ENCODE measurements at regions of chr19 and their contacts with region 1.

Region 1: DNA sequence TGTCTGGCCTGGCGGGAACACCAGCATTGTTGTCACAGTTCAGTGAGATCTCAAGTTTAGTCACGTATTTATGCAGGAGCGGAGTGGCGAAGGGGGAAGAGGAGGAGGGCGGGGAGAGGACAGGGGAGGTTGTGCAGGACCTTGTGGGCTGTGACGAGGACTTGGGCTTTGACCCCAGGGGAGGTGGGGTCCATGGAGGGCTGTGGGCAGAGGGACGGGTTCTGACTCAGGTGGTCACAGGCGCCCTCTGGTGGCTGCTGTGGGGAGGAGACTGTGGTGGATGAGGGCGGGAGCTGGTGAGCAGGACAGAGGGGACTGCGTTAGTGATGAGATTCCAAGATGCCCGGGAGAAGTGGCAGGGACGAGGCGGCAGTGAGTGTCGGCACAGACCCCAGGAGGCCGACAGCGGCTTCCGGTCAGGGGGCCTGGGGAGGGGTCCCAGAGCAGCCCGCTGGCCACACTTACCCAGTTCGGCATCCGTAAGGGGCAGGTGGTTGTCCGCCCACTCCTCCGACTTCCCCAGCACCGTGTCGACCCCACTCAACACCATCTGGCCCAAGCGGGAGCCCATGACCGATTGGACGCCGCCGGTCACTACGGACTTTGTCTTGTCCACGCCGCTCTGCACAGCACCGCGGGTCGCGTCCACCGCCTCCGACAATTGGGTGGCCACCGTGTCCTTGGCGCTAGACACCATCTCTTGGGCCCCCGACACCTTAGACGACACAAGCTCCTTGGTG is 15.7 kb downstream of the PLIN3 start:
- DNase-seq: peak; percentile 73
- H3K4me3 Mint-ChIP-seq: no peak overlapping the region
- H3K27ac Mint-ChIP-seq: no peak overlapping the region
- H3K4me1 Mint-ChIP-seq: peaks cover 2% of the 10 kb centered on the region
- H3K27me3 Mint-ChIP-seq: no peaks in the 10 kb centered on the region

Region 2: DNA sequence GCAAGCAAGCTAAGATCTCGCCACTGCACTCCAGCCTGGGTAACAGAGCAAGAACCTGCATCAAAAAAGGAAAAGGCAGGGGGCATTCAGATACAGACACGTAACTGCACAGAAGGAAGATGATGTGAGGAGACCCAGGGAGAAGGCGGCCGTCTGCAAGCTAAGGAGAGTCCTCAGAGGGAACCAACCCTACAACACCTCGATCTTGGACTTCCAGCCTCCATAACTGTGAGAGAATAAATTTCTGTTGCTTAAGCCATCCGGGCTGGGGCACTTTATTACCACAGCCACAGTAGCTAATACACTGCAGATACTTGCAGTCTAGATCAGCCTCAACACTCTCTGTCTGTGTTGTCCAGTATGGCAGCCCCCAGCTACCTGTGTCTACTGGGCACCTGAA is 28.1 kb before region 1 on chr19:
- CTCF ChIA-PET with region 1: interaction called, 10 read pairs
- POLR2A ChIA-PET with region 1: no interaction called
- DNase-seq: no peak
- H3K4me3 Mint-ChIP-seq: no peak overlapping the region
- H3K27ac Mint-ChIP-seq: no peak overlapping the region
- H3K4me1 Mint-ChIP-seq: peaks cover 6% of the 10 kb centered on the region
- H3K27me3 Mint-ChIP-seq: no peaks in the 10 kb centered on the region

Region 3: DNA sequence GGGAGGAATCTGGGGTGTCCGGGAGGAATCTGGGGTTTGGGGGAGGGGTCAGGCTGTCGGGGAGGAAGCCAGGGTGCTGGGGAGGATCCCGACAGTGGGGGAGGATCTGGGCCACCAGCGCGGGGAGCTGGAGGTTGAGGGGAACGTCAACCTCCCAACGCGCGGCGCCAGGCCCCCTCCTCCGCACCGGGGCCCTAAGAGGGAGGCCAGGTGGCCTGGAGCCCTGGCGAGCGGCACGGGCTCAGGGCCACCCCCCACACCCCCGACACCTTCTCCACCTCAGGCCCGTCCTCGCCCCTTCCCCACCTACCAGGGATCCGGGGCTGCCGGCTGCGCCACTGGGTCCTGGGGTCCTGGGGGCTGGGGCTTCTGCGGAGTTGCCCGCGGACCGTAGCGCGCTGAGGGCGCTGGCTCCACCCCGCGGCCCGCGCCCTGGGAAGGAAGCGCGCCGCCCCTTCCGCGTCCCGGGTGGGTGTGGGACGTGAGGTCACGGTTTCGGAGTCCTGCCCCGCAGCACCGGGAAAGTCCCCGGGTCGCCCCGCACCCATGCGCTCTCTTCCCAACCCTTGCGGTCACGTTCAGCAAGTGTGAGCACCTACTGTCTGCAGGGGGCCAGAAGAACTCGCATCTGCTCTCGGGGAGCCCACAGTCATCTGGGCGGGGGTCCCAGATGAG is 20.3 kb before region 1 on chr19 and contains the start of gene TICAM1:
- CTCF ChIA-PET with region 1: interaction called, 15 read pairs
- POLR2A ChIA-PET with region 1: interaction called, 6 read pairs
- DNase-seq: peak; percentile 77
- H3K4me3 Mint-ChIP-seq: peak within 1 kb of the TSS; percentile 94
- H3K27ac Mint-ChIP-seq: peak within 1 kb of the TSS; percentile 90
- H3K4me1 Mint-ChIP-seq: peaks cover 28% of the 10 kb centered on the region
- H3K27me3 Mint-ChIP-seq: no peaks in the 10 kb centered on the region
- total RNA-seq, gene TICAM1: 25.9 to 26.0 TPM

Region 4: DNA sequence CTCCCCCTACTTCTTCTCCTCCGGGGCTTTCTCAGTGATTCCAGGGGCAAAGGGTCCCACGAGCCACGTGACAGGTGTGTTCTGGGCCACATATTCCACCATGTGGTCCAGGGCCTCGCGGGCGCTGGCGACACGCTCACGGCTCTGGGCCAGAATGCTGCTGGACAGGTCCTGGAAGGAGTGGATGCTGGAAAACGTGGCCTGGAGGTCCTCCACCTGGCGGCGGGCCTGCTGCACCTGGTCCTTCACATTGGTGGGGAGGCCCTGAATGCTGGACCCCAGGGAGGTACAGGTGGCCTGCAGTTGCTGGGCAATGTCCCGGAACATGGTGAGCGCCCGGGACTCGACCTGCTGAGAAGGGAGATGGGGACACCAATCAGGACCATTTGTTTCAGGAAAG is 12.5 kb before region 1 on chr19:
- CTCF ChIA-PET with region 1: interaction called, 12 read pairs
- POLR2A ChIA-PET with region 1: no interaction called
- DNase-seq: no peak
- H3K4me3 Mint-ChIP-seq: no peak overlapping the region
- H3K27ac Mint-ChIP-seq: peak overlapping the region; percentile 10
- H3K4me1 Mint-ChIP-seq: peaks cover 22% of the 10 kb centered on the region
- H3K27me3 Mint-ChIP-seq: no peaks in the 10 kb centered on the region

Region 5: GRCh38 chr19:4867534-4868285 is 16.0 kb after region 1 on chr19 and contains the start of gene PLIN3:
- CTCF ChIA-PET with region 1: interaction called, 22 read pairs
- POLR2A ChIA-PET with region 1: interaction called, 4 read pairs
- DNase-seq: peak; percentile 95
- H3K4me3 Mint-ChIP-seq: peak within 1 kb of the TSS; percentile 76
- H3K27ac Mint-ChIP-seq: peak within 1 kb of the TSS; percentile 54
- H3K4me1 Mint-ChIP-seq: peaks cover 39% of the 10 kb centered on the region
- H3K27me3 Mint-ChIP-seq: peaks cover 9% of the 10 kb centered on the region
- total RNA-seq, gene PLIN3: 36.3 to 40.5 TPM

Region 6: DNA sequence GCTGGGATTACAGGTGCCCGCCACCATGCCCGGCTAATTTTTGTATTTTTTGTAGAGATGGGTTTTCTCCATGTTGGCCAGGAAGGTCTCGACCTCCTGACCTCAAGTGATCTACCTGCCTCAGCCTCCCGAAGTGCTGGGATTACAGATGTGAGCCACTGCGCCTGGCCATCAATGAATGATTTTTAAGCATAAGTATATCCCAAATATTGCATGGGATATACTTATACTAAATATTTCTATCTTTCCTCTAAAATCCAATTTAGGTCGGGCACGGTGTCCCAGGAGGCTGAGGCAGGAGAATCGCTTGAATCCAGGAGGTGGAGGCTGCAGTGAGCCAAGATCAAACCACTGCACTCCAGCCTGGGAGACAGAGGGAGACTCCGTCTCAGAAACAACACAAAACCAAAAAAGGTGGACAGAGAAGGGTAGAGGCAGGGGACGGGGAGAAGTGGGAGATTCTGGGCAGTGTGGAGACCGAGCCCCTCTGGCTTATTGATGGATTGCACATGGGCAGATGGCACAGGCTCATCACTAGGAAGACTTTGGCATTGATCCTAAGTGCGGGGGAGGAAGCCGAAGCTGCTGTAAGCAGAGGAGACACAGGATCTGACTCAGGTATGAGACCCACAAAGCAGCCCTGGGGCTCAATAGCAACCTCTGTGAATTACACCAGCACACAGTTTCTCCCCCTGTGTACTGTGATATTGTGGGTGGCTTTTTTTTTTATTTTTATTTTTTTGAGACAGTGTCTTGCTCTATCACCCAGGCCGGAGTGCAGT is 37.5 kb after region 1 on chr19:
- CTCF ChIA-PET with region 1: no interaction called
- POLR2A ChIA-PET with region 1: no interaction called
- DNase-seq: no peak
- H3K4me3 Mint-ChIP-seq: no peak overlapping the region
- H3K27ac Mint-ChIP-seq: no peak overlapping the region
- H3K4me1 Mint-ChIP-seq: no peaks in the 10 kb centered on the region
- H3K27me3 Mint-ChIP-seq: no peaks in the 10 kb centered on the region

Measured in activated CD4-positive, alpha-beta memory T cell treated with anti-CD3 and anti-CD28 coated beads, Interleukin-2, amount 10 ng/mL, durations not matched to agents 7 days and 5 days (primary cell).